ENCODE measurements at regions of chr10 and their contacts with region 1.

Region 1: GRCh38 chr10:32958085-32959005 is at the start of gene ITGB1:
- DNase-seq: peak; percentile 99
- H3K4me3 Mint-ChIP-seq: peak within 1 kb of the TSS; percentile 98
- H3K27ac Mint-ChIP-seq: peak within 1 kb of the TSS; percentile 100
- H3K4me1 Mint-ChIP-seq: peaks cover 32% of the 10 kb centered on the region
- H3K27me3 Mint-ChIP-seq: no peaks in the 10 kb centered on the region
- CTCF ChIP-seq: no peak
- total RNA-seq, gene ITGB1: 1,388 and 1,455 TPM in 2 replicates

Region 2: GRCh38 chr10:32980558-32981468 is 22.5 kb after region 1 on chr10:
- CTCF ChIA-PET with region 1: interaction called, 9 read pairs
- intact Hi-C with region 1: loop called (anchors 1 kb)
- DNase-seq: peak; percentile 93
- H3K4me3 Mint-ChIP-seq: peak overlapping the region; percentile 82
- H3K27ac Mint-ChIP-seq: peak overlapping the region; percentile 100
- H3K4me1 Mint-ChIP-seq: peaks cover 42% of the 10 kb centered on the region
- H3K27me3 Mint-ChIP-seq: no peaks in the 10 kb centered on the region
- CTCF ChIP-seq: no peak

Region 3: GRCh38 chr10:33015761-33016547 is 57.6 kb after region 1 on chr10:
- CTCF ChIA-PET with region 1: no interaction called
- intact Hi-C with region 1: no loop called
- DNase-seq: no peak
- H3K4me3 Mint-ChIP-seq: no peak overlapping the region
- H3K27ac Mint-ChIP-seq: peak overlapping the region; percentile 27
- H3K4me1 Mint-ChIP-seq: peaks cover 28% of the 10 kb centered on the region
- H3K27me3 Mint-ChIP-seq: no peaks in the 10 kb centered on the region
- CTCF ChIP-seq: no peak

Measured in Calu3 (cell line).